PC-9 (cell line): ENCODE measurements at regions of chr6 and their contacts with region 1.

Region 1: DNA sequence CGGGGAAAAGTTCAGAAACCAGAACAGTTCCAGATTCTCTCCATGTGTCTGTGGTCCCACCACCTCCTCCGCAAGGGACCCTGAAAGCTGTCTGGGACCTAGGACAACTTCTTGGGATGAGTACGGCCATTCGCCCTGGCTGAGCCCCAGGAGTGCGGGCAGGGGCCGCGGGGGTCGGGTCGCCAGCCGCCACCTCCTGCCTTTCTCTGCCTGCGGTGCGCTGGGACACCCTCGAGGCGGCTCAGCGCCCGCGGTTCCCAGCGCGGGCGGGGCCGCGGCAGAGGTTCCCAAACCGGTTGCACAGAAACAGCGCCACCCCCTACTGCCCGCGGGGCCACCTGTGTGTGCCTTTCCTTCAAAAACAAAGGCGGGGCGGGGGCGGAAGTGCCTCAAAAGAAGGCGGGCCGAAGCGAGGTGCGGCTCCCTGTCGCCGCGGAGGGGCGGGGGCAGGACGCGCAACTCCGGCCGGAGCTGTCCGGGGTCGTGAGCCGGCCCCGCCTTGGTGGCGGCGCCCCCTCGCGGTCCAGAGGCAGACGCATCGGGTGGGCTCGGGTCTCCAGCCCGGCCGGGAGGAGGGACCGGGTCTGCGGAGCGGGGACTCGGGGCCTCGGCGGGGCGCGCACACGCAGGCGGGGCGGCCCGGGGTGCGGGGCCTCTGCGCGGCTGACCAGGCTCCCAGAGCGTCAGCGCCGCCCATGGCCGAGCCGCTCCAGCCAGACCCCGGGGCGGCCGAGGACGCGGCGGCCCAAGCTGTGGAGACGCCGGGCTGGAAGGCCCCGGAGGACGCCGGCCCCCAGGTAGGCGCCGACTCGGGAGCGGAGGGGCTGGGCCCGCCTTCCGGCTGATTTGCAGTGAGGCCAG is at the start of gene HEBP2:
- DNase-seq: peak; percentile 94 to 95
- H3K4me3 ChIP-seq: peak within 1 kb of the TSS; percentile 85
- H3K27ac ChIP-seq: peak within 1 kb of the TSS; percentile 81
- H3K4me1 ChIP-seq: peaks cover 22% of the 10 kb centered on the region
- H3K27me3 ChIP-seq: no peaks in the 10 kb centered on the region
- CTCF ChIP-seq: peak; percentile 67
- total RNA-seq, gene HEBP2: 41.0 and 55.0 TPM in 2 replicates

Region 2: GRCh38 chr6:138161338-138162110 is 242.5 kb before region 1 on chr6 and contains the start of gene ARFGEF3:
- CTCF ChIA-PET with region 1: no interaction called
- POLR2A ChIA-PET with region 1: no interaction called
- intact Hi-C with region 1: loop called (anchors 5 kb)
- DNase-seq: peak; percentile 63 to 66
- H3K4me3 ChIP-seq: peak within 1 kb of the TSS; percentile 62
- H3K27ac ChIP-seq: peak within 1 kb of the TSS; percentile 52
- H3K4me1 ChIP-seq: peaks cover 24% of the 10 kb centered on the region
- H3K27me3 ChIP-seq: no peaks in the 10 kb centered on the region
- CTCF ChIP-seq: no peak
- total RNA-seq, gene ARFGEF3: 9.9 and 10.0 TPM in 2 replicates

Region 3: GRCh38 chr6:138204792-138205384 is 199.1 kb before region 1 on chr6:
- CTCF ChIA-PET with region 1: no interaction called
- POLR2A ChIA-PET with region 1: interaction called, 10 read pairs
- intact Hi-C with region 1: no loop called
- DNase-seq: no peak
- H3K4me3 ChIP-seq: no peak overlapping the region
- H3K27ac ChIP-seq: no peak overlapping the region
- H3K4me1 ChIP-seq: no peaks in the 10 kb centered on the region
- H3K27me3 ChIP-seq: no peaks in the 10 kb centered on the region
- CTCF ChIP-seq: no peak

Region 4: DNA sequence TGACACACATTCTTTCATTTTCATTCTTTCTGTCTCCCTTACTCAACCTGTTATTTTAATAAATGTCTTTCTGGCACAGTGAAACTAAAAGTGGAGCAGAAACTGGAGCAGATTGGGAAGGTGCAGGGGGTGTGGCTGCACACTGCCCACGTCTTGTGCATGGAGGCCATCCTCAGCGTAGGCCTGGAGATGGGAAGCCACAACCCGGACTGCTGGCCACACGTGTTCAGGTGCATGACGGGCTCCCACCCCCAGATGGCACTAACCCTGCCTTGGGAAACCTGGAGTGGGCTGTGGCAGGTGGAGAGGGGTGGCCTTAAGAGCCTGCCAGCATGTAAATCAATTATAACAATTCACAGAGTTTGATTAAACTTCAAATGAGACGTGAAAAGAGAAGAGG is 114.3 kb before region 1 on chr6:
- CTCF ChIA-PET with region 1: no interaction called
- POLR2A ChIA-PET with region 1: interaction called, 3 read pairs
- intact Hi-C with region 1: loop called (anchors 2 kb)
- DNase-seq: peak in 1 of 2 experiments; percentile 2
- H3K4me3 ChIP-seq: no peak overlapping the region
- H3K27ac ChIP-seq: peak overlapping the region; percentile 83
- H3K4me1 ChIP-seq: peaks cover 21% of the 10 kb centered on the region
- H3K27me3 ChIP-seq: no peaks in the 10 kb centered on the region
- CTCF ChIP-seq: 0 out of 2 replicates have a peak, but pooled peaks have one; percentile 32

Region 5: DNA sequence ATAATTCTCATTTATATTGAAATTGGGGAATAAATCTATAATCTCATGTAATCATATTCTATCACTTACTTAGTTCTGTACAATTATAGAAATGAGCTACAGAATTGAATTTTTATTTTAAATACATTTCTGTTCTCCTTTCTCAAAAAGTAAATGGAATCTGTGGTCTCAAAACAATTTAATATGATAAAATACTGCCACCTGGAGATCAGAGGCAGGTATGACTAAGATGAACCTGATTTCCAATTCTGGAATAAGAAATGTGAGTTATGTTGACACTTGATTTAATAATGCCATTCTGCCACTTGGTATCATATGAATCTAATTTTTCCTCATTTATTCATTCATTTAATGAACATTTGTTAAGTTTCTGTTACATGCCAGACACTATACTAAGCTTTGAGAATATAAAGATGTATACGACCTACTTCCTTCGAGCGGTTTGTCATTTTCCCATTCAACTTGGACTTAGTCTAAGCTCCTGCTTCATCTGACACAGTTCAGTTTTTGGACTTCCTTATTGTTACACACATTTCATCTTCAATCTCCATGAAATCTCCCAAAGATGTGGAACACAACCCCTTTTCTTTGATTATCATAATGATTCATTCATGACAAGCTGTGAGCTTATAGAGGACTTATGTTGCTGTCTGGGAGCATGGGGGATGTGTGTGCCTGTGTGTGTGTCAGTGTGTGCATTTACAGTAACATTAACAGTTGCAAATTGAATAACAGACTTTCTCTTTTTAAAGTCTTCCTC is 362.0 kb after region 1 on chr6:
- CTCF ChIA-PET with region 1: no interaction called
- POLR2A ChIA-PET with region 1: no interaction called
- intact Hi-C with region 1: loop called (anchors 1 kb)
- DNase-seq: peak in 1 of 2 experiments; percentile 60
- H3K4me3 ChIP-seq: no peak overlapping the region
- H3K27ac ChIP-seq: no peak overlapping the region
- H3K4me1 ChIP-seq: no peaks in the 10 kb centered on the region
- H3K27me3 ChIP-seq: no peaks in the 10 kb centered on the region
- CTCF ChIP-seq: peak; percentile 95